ENCODE measurements at regions of chr5 and their contacts with region 1.

Region 1: DNA sequence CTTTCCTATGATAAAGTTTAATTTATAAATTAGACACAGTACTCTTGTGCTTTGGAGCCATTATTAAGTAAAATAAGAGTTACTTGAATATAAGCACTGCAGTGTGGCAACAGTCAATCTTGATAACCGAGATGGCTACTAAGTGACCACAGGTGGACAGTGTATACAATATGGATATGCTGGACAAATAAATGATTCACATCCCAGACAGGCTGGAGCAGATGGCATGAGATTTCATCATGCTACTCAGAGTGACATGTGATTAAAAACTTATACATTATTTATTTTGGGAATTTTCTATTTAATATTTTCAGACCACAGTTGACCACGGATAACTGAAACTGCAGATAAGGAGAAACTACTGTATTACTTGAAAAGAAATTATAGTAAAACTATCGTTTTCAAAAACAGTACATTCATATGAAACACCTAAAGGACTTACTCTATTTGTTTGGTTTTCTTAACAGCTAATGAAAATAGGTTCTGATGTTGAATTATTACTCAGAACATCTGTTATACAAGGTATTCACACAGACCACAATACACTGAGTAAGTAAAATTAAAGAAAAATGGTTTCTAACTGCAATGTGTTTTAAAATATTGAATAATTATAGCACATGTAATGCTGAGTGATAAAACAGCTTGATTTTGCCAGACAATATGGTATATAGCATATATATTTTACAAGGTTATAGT is 16.0 kb downstream of the LYRM7 start:
- DNase-seq: no peak
- H3K4me3 ChIP-seq: no peak overlapping the region
- H3K27ac ChIP-seq: no peak overlapping the region
- H3K4me1 ChIP-seq: peaks cover 3% of the 10 kb centered on the region
- H3K27me3 ChIP-seq: no peaks in the 10 kb centered on the region
- CTCF ChIP-seq: no peak
- POLR2A ChIP-seq: no peak

Region 2: DNA sequence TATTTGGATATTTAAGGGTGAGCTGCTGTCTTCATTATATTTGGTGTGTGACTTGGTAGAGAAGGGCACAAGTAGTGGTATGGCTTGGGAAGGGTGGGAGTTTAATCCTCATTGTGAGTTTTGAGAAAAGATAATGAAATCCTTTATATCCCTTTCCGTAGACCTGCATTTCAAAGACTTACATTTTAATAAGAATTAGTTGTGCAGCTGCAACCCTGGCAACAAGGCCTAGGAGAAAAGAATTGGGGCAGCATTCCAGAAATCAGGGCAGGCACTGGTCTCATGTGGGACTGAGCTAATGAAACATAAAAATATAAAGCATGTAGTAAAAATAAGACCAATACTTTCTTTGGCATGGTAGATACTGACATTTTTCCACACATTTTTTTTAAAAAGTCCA is 137.6 kb after region 1 on chr5:
- CTCF ChIA-PET with region 1: no interaction called
- POLR2A ChIA-PET with region 1: no interaction called
- dilution Hi-C with region 1: no loop called
- intact Hi-C with region 1: loop called (anchors 5 kb)
- DNase-seq: no peak
- H3K4me3 ChIP-seq: no peak overlapping the region
- H3K27ac ChIP-seq: no peak overlapping the region
- H3K4me1 ChIP-seq: peaks cover 6% of the 10 kb centered on the region
- H3K27me3 ChIP-seq: no peaks in the 10 kb centered on the region
- CTCF ChIP-seq: no peak
- POLR2A ChIP-seq: no peak